Left ventricle myocardium superior (tissue), 1 donor: ENCODE measurements at regions of chr10 and their contacts with region 1.

Region 1: DNA sequence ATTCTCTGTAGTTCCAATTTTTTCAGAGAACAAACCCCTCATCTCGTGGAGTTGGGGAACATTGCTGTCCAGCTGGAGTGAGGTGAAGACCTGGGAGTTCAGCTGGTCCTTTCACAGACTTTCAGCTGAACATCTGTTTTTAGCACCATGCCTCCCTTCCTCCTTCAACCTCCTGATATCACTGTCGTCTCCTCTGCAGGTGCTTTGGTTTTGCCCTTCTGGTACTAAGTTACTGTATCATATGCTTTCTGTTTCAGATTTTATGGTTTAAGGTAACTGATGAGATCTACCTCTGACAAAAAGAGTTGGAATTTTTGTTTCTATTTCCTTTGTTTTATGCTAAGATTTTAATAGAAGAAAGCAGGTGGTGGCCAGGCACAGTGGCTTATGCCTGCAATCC is 102.9 kb downstream of the ZNF438 start:
- DNase-seq: no peak
- ATAC-seq: no peak

Region 2: GRCh38 chr10:30709700-30710358 is 218.9 kb before region 1 on chr10:
- intact Hi-C with region 1: no loop called
- DNase-seq: no peak
- ATAC-seq: peak; percentile 21

Region 3: GRCh38 chr10:30840406-30841050 is 88.2 kb before region 1 on chr10:
- intact Hi-C with region 1: no loop called
- DNase-seq: peak; percentile 42
- ATAC-seq: peak; percentile 74

Region 4: GRCh38 chr10:30959855-30960247 is 31.1 kb after region 1 on chr10:
- intact Hi-C with region 1: loop called (anchors 5 kb)
- DNase-seq: no peak
- ATAC-seq: no peak

Region 5: DNA sequence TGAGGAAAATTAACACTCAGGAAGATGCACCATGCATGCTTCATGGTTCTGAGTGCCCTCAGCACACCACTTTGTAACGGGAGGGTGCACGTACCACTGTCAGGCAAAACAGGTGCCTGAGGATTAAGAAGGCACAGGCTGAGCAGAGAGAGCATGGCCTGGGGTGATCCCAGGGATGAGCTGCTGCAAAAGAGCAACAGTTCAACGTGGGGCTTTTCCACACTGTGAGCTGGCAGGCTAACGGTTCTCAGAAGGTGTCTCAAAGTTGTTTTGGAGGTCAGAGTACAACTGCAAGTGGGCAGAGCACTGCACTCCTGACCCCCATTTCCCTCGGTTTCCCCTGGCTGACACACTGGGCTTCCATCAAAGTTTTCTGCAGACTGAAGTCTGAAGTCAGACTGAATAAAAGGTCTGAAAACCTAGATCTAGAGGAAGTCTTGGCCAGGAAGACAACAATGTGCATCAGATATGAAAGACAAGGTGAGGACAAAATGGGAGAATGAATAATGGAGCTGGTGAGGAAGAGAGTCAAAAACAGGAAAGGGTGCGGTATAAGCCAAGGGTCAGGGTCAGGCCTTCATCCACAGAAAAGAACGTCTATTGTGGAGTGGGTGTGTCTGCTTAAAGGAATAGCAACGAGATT is 82.4 kb after region 1 on chr10:
- intact Hi-C with region 1: no loop called
- DNase-seq: no peak
- ATAC-seq: peak; percentile 56